ENCODE measurements at regions of chr1 and their contacts with region 1.

Region 1: GRCh38 chr1:18100491-18101063 is 7.0 kb upstream of the IGSF21 start:
- DNase-seq: peak in 6 of 9 donors; percentile 4 to 49 (median 34)
- ATAC-seq: no peak
- H3K4me3 ChIP-seq: no peak overlapping the region
- H3K4me3 Mint-ChIP-seq: no peak overlapping the region
- H3K27ac ChIP-seq: no peak overlapping the region
- H3K27ac Mint-ChIP-seq: no peak overlapping the region
- H3K4me1 ChIP-seq: no peaks in the 10 kb centered on the region
- H3K4me1 Mint-ChIP-seq: peaks cover 0 to 7% (median 0%) of the 10 kb centered on the region in 7 donors
- H3K27me3 ChIP-seq: no peaks in the 10 kb centered on the region
- H3K27me3 Mint-ChIP-seq: peaks cover 2 to 44% (median 30%) of the 10 kb centered on the region in 5 donors

Region 2: GRCh38 chr1:17119076-17119772 is 981.4 kb before region 1 on chr1 and contains the start of gene PADI2:
- CTCF ChIA-PET with region 1: no interaction called
- POLR2A ChIA-PET with region 1: no interaction called
- intact Hi-C with region 1: no loop called
- DNase-seq: peak; percentile 3 to 51 (median 42)
- ATAC-seq: peak; percentile 93
- H3K4me3 ChIP-seq: no peak within 1 kb of the TSS
- H3K4me3 Mint-ChIP-seq: peak within 1 kb of the TSS in 9 of 10 donors; percentile 12 to 75 (median 48)
- H3K27ac ChIP-seq: no peak within 1 kb of the TSS
- H3K27ac Mint-ChIP-seq: no peak within 1 kb of the TSS
- H3K4me1 ChIP-seq: peaks cover 0 to 7% of the 10 kb centered on the region in 2 donors
- H3K4me1 Mint-ChIP-seq: peaks cover 0 to 23% (median 5%) of the 10 kb centered on the region in 7 donors
- H3K27me3 ChIP-seq: no peaks in the 10 kb centered on the region
- H3K27me3 Mint-ChIP-seq: peaks cover 25 to 51% (median 38%) of the 10 kb centered on the region in 5 donors
- total RNA-seq, gene PADI2: 0.08 to 11.2 (median 0.12) TPM

Region 3: DNA sequence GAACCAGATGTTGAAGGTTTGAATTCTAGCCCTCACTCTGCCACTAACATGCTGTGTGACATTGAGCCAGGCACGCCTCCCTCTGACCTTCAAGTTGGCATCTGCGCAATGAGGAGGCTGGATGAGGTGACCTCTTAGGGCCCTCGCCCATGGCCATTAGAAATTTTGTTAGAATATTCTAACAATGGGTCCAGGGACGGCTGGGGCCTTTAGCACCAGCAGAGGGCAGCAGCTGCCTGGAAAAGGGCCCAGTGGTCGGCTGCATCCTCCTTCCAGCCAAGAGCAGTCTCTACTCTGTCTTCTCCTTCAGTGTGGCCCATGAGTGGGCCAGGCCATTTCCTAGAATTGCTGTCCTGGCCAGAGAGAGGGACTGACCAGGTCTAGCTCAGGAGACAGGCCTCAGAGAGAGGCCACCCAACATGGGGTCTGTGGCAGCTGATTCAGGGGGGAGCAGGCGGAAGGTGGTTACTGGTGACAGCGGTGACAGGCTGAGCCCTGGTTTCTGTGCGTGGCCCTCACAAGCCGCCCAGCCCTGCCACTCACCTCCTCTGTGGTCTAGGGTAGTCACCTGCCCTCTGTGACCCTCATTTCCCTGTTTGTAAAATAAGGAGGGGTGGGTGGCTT is 446.7 kb before region 1 on chr1:
- CTCF ChIA-PET with region 1: no interaction called
- POLR2A ChIA-PET with region 1: no interaction called
- intact Hi-C with region 1: loop called in 1 of 2 experiments (anchors 2 kb)
- DNase-seq: peak in 5 of 9 donors; percentile 8 to 17 (median 9)
- ATAC-seq: peak; percentile 44
- H3K4me3 ChIP-seq: no peak overlapping the region
- H3K4me3 Mint-ChIP-seq: no peak overlapping the region
- H3K27ac ChIP-seq: no peak overlapping the region
- H3K27ac Mint-ChIP-seq: no peak overlapping the region
- H3K4me1 ChIP-seq: no peaks in the 10 kb centered on the region
- H3K4me1 Mint-ChIP-seq: peaks cover 0 to 4% (median 0%) of the 10 kb centered on the region in 7 donors
- H3K27me3 ChIP-seq: no peaks in the 10 kb centered on the region
- H3K27me3 Mint-ChIP-seq: peaks cover 0 to 3% (median 0%) of the 10 kb centered on the region in 5 donors

Region 4: DNA sequence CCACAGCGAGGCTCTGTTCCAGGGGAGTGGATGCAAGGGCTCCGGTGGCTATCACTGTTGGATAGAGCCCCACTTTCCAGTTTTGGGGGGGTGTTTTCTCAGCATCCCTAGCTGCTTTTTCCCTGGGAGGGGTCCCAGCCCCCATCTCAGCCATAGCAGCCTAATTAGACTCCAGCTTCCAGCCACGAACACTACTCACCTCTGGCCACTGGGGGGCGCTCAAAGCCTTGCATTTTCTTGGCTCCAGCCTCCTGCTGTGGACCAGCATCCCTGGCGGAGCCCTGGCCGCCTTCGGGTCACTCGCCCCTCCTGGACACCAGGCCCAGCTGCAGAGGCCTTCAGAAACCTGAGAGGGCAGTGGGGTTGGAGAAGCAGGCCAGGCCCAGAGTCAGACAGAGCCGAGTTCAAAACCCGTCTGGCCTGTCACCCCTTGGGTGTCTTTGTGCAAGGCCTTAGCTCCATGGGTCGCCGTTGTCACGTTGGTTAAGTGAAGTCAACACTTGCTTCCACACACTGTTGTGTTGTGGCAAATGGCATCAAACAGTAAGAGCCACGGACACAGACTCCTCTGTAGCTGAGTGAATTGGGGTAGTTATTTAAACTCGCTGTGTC is 438.9 kb before region 1 on chr1:
- CTCF ChIA-PET with region 1: interaction called, 4 read pairs
- POLR2A ChIA-PET with region 1: no interaction called
- intact Hi-C with region 1: loop called in 1 of 2 experiments (anchors 2 kb)
- DNase-seq: peak; percentile 7 to 56 (median 42)
- ATAC-seq: no peak
- H3K4me3 ChIP-seq: no peak overlapping the region
- H3K4me3 Mint-ChIP-seq: no peak overlapping the region
- H3K27ac ChIP-seq: no peak overlapping the region
- H3K27ac Mint-ChIP-seq: no peak overlapping the region
- H3K4me1 ChIP-seq: no peaks in the 10 kb centered on the region
- H3K4me1 Mint-ChIP-seq: peaks cover 0 to 4% (median 0%) of the 10 kb centered on the region in 7 donors
- H3K27me3 ChIP-seq: no peaks in the 10 kb centered on the region
- H3K27me3 Mint-ChIP-seq: peaks cover 0 to 9% (median 0%) of the 10 kb centered on the region in 5 donors

Region 5: DNA sequence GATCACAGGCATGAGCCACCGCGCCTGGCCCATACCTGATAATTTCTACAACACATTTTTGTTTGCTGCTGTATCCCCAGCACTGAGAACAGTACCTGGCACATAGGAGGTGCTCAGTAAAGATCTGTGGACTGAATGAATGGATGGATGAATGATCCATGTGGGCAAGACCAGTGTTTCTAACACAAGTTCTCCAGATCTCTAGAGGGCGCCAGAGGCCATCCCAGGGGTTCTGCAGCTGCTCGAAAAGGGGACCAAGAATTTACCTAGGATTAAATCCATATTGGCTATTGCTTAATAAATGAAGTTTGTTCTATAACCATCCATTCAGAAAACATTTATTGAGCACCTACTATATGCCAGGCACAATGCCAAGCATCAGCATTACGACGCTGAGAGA is 177.7 kb before region 1 on chr1:
- CTCF ChIA-PET with region 1: interaction called, 7 read pairs
- POLR2A ChIA-PET with region 1: no interaction called
- intact Hi-C with region 1: loop called in 1 of 2 experiments (anchors 1 kb)
- DNase-seq: peak in 3 of 9 donors; percentile 7 to 9 (median 9)
- ATAC-seq: no peak
- H3K4me3 ChIP-seq: no peak overlapping the region
- H3K4me3 Mint-ChIP-seq: no peak overlapping the region
- H3K27ac ChIP-seq: no peak overlapping the region
- H3K27ac Mint-ChIP-seq: no peak overlapping the region
- H3K4me1 ChIP-seq: no peaks in the 10 kb centered on the region
- H3K4me1 Mint-ChIP-seq: peaks cover 0 to 11% (median 0%) of the 10 kb centered on the region in 7 donors
- H3K27me3 ChIP-seq: no peaks in the 10 kb centered on the region
- H3K27me3 Mint-ChIP-seq: peaks cover 0 to 60% (median 41%) of the 10 kb centered on the region in 5 donors

Region 6: DNA sequence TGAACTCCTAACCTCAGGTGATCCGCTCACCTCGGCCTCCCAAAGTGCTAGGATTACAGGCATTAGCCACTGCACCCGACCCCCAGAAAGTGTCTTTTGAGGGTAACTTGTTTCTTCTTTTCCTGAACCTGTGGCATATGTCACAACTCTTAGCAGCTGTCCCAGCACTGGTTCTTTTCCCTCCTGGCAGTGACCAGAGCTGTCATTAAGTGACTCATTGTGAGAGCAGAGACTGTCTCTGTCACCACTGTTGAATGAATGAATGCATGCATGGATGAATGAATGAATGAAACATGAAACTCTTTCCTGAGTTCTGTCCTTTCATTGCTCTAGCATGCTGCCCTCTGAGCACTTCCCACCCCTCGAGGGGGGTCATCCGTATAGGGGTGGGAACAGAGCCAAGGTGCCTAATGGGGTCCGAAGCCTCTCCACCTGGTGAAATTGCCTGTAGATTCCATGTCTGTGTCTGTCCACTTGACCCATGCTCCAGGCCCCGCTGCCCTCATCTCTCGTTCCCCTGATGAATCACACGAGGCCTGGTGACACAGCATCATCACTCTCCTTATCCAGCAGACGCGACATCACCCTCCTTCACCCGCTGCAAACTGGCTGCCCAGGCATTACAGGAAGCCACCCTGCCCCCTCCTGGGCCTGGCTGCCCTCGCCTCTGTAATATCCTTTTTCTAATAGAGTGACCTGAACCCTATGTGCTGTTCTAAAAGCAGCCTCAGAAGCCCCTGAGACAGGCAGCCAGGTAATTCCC is 82.0 kb after region 1 on chr1:
- CTCF ChIA-PET with region 1: no interaction called
- POLR2A ChIA-PET with region 1: no interaction called
- intact Hi-C with region 1: no loop called
- DNase-seq: no peak
- ATAC-seq: peak; percentile 45
- H3K4me3 ChIP-seq: no peak overlapping the region
- H3K4me3 Mint-ChIP-seq: no peak overlapping the region
- H3K27ac ChIP-seq: no peak overlapping the region
- H3K27ac Mint-ChIP-seq: no peak overlapping the region
- H3K4me1 ChIP-seq: no peaks in the 10 kb centered on the region
- H3K4me1 Mint-ChIP-seq: no peaks in the 10 kb centered on the region
- H3K27me3 ChIP-seq: no peaks in the 10 kb centered on the region
- H3K27me3 Mint-ChIP-seq: peaks cover 8 to 41% (median 38%) of the 10 kb centered on the region in 5 donors

Measured in naive thymus-derived CD4-positive, alpha-beta T cell (primary cell).